ENCODE measurements at regions of chr2 and their contacts with region 1.

Region 1: GRCh38 chr2:55050133-55050994 is at the start of gene RTN4:
- DNase-seq: peak; percentile 97
- ATAC-seq: peak; percentile 81
- H3K4me3 ChIP-seq: peak within 1 kb of the TSS; percentile 90 to 93
- H3K27ac ChIP-seq: peak within 1 kb of the TSS; percentile 90
- H3K4me1 ChIP-seq: peaks cover 33 to 72% of the 10 kb centered on the region in 2 experiments
- H3K27me3 ChIP-seq: no peaks in the 10 kb centered on the region
- CTCF ChIP-seq: 0 out of 6 replicates have a peak, but pooled peaks of 1 of the 3 experiments have one; percentile 10
- POLR2A ChIP-seq: peak; percentile 95
- RAD21 ChIP-seq: 0 out of 2 replicates have a peak, but pooled peaks have one; percentile 22
- total RNA-seq, gene RTN4: 221 TPM

Region 2: GRCh38 chr2:53949457-53949856 is 1100.9 kb before region 1 on chr2:
- CTCF ChIA-PET with region 1: no interaction called
- POLR2A ChIA-PET with region 1: no interaction called
- RAD21 ChIA-PET with region 1: no interaction called
- intact Hi-C with region 1: no loop called
- DNase-seq: no peak
- ATAC-seq: no peak
- H3K4me3 ChIP-seq: no peak overlapping the region
- H3K27ac ChIP-seq: no peak overlapping the region
- H3K4me1 ChIP-seq: no peaks in the 10 kb centered on the region
- H3K27me3 ChIP-seq: no peaks in the 10 kb centered on the region
- CTCF ChIP-seq: no peak
- POLR2A ChIP-seq: no peak
- RAD21 ChIP-seq: no peak

Region 3: DNA sequence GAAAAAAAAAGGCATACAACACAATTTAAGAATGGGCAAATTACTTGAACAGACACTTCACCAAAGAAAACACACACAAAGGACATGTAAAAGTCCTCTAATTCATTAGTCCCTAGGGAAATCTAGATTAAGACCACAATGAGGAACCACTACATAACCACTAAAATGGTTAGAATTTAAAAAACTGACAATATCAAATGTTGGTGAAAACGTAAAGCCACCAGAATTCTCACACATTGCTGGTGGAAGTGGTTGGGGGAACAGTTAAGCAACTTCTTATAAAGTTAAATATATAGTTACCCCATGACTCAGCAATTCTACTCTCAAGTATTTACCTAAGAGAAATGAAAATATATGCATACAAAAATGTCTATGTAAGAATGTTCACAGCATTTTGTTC is 11.9 kb before region 1 on chr2:
- CTCF ChIA-PET with region 1: interaction called, 6 read pairs
- POLR2A ChIA-PET with region 1: interaction called, 13 read pairs
- RAD21 ChIA-PET with region 1: no interaction called
- intact Hi-C with region 1: no loop called
- DNase-seq: no peak
- ATAC-seq: no peak
- H3K4me3 ChIP-seq: no peak overlapping the region
- H3K27ac ChIP-seq: no peak overlapping the region
- H3K4me1 ChIP-seq: peaks cover 0 to 11% of the 10 kb centered on the region in 2 experiments; a peak in 2 of 4 replicates
- H3K27me3 ChIP-seq: no peaks in the 10 kb centered on the region
- CTCF ChIP-seq: no peak
- POLR2A ChIP-seq: no peak
- RAD21 ChIP-seq: no peak

Region 4: DNA sequence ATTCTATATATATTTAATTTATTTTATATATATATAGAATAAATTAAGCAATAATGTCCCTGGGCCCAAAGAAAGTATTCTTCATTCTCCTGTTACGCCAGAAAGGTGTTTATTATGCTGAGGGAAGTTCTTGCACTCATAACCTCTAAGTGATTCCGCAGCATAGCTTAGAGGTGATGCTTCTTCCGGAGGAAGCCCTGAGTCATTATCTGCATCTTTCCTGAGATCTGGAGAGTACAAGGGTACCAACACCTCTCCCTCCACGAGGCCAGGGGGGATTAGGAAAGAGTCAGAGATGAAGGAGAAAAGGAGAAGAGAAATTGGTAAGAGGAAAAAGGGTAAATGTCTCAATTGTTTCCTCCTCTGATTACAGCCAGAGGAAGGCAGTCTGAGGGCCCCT is 43.0 kb after region 1 on chr2:
- CTCF ChIA-PET with region 1: no interaction called
- POLR2A ChIA-PET with region 1: interaction called, 13 read pairs
- RAD21 ChIA-PET with region 1: no interaction called
- intact Hi-C with region 1: loop called (anchors 2 kb)
- DNase-seq: peak; percentile 38
- ATAC-seq: peak; percentile 89
- H3K4me3 ChIP-seq: peak overlapping the region in 1 of 2 experiments; percentile 48; a peak in 2 of 4 replicates
- H3K27ac ChIP-seq: peak overlapping the region; percentile 23; the same call in 1 of the 2 replicates
- H3K4me1 ChIP-seq: peaks cover 9 to 38% of the 10 kb centered on the region in 2 experiments
- H3K27me3 ChIP-seq: no peaks in the 10 kb centered on the region
- CTCF ChIP-seq: no peak
- POLR2A ChIP-seq: no peak
- RAD21 ChIP-seq: no peak

Region 5: GRCh38 chr2:55111570-55112228 is 61.3 kb after region 1 on chr2:
- CTCF ChIA-PET with region 1: interaction called, 6 read pairs
- POLR2A ChIA-PET with region 1: interaction called, 38 read pairs
- RAD21 ChIA-PET with region 1: interaction called in 1 of 2 experiments, 4 read pairs
- intact Hi-C with region 1: loop called (anchors 2 kb)
- DNase-seq: peak; percentile 74
- ATAC-seq: peak; percentile 84
- H3K4me3 ChIP-seq: peak overlapping the region; percentile 2 to 38; a peak in 2 of 4 replicates
- H3K27ac ChIP-seq: peak overlapping the region; percentile 59
- H3K4me1 ChIP-seq: peaks cover 43 to 73% of the 10 kb centered on the region in 2 experiments
- H3K27me3 ChIP-seq: no peaks in the 10 kb centered on the region
- CTCF ChIP-seq: no peak
- POLR2A ChIP-seq: no peak
- RAD21 ChIP-seq: no peak

Region 6: DNA sequence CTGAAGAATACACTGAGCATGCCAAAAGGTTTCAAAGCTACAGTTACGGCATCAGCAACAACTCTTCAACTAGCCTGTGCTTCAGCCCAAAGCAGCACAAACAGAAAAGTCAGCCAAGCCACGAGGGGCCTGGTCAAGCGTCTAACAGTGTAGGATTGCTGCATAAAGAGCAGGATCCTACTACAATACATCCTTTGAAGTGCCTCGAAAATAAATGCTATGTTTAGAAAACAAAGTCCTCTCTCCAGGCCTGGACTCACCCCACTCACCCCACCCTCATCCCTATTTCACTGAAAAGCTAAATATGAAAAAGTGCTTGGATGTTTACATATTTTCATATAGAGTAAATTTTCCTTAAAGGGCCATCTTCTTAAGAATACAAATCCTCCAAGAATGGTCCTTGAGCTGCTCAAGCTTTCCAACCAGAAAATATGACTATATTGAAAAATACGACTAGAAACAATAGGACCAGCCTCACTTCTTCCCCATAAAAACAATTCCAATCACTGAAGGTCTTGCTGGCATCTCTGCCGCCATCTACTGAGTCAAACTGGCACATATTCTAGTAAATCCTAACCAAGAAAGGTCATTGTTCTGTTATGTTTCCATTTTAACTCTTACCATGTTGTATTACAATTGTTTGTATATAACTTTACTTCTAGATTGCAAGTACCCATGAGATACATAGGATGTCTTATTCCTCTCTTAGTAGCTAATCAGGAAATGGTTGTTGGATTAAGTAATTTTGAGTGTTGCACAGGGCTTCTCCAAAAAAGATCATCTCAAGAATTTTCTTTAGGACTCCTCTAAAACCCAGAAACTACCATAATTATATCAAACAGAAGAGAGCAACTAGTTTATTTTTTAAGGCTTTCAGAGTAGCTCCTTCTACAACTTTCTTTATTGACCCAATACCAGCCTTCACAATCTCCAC is 118.1 kb after region 1 on chr2:
- CTCF ChIA-PET with region 1: interaction called, 9 read pairs
- POLR2A ChIA-PET with region 1: interaction called, 15 read pairs
- RAD21 ChIA-PET with region 1: interaction called in 1 of 2 experiments, 4 read pairs
- intact Hi-C with region 1: loop called (anchors 1 kb)
- DNase-seq: peak; percentile 29
- ATAC-seq: peak; percentile 86
- H3K4me3 ChIP-seq: no peak overlapping the region
- H3K27ac ChIP-seq: no peak overlapping the region
- H3K4me1 ChIP-seq: peaks cover 0 to 6% of the 10 kb centered on the region in 2 experiments; a peak in 2 of 4 replicates
- H3K27me3 ChIP-seq: no peaks in the 10 kb centered on the region
- CTCF ChIP-seq: peak; percentile 70 to 89 (median 87)
- POLR2A ChIP-seq: no peak
- RAD21 ChIP-seq: peak; percentile 94

Region 7: GRCh38 chr2:55232084-55232862 is 181.9 kb after region 1 on chr2 and contains the starts of genes CLHC1 and RPS27A:
- CTCF ChIA-PET with region 1: no interaction called
- POLR2A ChIA-PET with region 1: interaction called, 3 read pairs
- RAD21 ChIA-PET with region 1: no interaction called
- intact Hi-C with region 1: loop called (anchors 1 kb)
- DNase-seq: peak; percentile 98
- ATAC-seq: peak; percentile 89
- H3K4me3 ChIP-seq: peak within 1 kb of the TSS; percentile 77 to 91
- H3K27ac ChIP-seq: peak within 1 kb of the TSS; percentile 98
- H3K4me1 ChIP-seq: peaks cover 8 to 21% of the 10 kb centered on the region in 2 experiments
- H3K27me3 ChIP-seq: no peaks in the 10 kb centered on the region
- CTCF ChIP-seq: no peak
- POLR2A ChIP-seq: peak; percentile 73
- RAD21 ChIP-seq: no peak
- total RNA-seq, gene CLHC1: 11.1 TPM
- total RNA-seq, gene RPS27A: 1,291 TPM